ENCODE measurements at regions of chr18 and their contacts with region 1.

Region 1: GRCh38 chr18:72544092-72544886 is at the start of gene CBLN2:
- DNase-seq: no peak
- ATAC-seq: peak; percentile 96
- H3K4me3 ChIP-seq: peak within 1 kb of the TSS; percentile 52 to 55
- H3K27ac ChIP-seq: no peak within 1 kb of the TSS
- H3K4me1 ChIP-seq: no peaks in the 10 kb centered on the region
- H3K27me3 ChIP-seq: no peaks in the 10 kb centered on the region; the same call in 1 of the 2 replicates
- CTCF ChIP-seq: peak; percentile 82
- total RNA-seq, gene CBLN2: 5.7 TPM

Region 2: DNA sequence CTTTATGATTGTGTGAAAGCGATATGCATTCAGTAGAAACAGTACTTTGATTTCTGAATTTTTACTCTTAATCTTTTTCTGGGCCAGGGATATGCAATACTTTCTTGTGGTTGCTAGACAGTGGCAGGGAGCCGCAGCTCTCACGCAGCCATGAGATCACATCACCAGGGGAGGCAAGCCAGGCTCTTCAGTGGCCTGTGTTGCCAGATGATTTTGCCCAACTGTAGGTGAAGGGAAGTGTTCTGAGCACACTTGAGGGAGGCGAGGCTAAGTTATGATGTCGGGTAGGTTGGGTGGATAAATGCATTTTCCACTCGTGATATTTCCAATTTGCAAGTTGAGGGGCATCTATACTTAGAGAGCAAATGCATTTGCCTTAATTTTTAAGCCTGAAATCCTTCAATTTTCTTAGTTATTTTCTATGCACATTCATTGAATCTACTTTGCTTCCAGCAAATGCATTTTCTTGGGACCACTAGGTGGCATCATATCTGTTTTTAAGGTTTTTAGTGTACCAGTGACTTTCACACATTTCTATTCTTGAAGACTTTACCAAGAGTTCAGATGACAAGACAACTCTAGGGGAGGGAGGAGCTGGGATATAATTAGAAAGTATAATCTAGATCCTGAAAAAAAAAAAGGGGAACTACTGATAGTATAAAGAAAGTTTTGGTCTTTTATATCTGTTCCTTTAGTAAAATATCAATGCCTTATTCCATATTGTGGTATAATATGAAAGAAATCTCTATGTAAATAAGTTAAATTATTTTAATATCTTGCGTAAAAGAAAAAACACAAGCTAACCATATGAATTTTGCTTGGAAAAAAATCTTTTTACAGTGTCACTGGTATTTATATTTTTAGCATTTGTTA is 1612.1 kb before region 1 on chr18:
- CTCF ChIA-PET with region 1: interaction called, 3 read pairs
- POLR2A ChIA-PET with region 1: no interaction called
- in situ Hi-C with region 1: no loop called
- intact Hi-C with region 1: loop called (anchors 10 kb)
- DNase-seq: no peak
- ATAC-seq: peak; percentile 53; the same call in 1 of the 2 replicates
- H3K4me3 ChIP-seq: no peak overlapping the region
- H3K27ac ChIP-seq: peak overlapping the region; percentile 39; the same call in 1 of the 2 replicates
- H3K4me1 ChIP-seq: no peaks in the 10 kb centered on the region
- H3K27me3 ChIP-seq: no peaks in the 10 kb centered on the region
- CTCF ChIP-seq: peak; percentile 55; the same call in 1 of the 2 replicates

Region 3: GRCh38 chr18:72984290-72984689 is 440.0 kb after region 1 on chr18:
- CTCF ChIA-PET with region 1: no interaction called
- POLR2A ChIA-PET with region 1: no interaction called
- in situ Hi-C with region 1: no loop called
- intact Hi-C with region 1: no loop called
- DNase-seq: no peak
- ATAC-seq: no peak
- H3K4me3 ChIP-seq: no peak overlapping the region
- H3K27ac ChIP-seq: no peak overlapping the region
- H3K4me1 ChIP-seq: no peaks in the 10 kb centered on the region
- H3K27me3 ChIP-seq: no peaks in the 10 kb centered on the region
- CTCF ChIP-seq: no peak

Measured in Panc1 (cell line).